ENCODE measurements at regions of chr21 and their contacts with region 1.

Region 1: DNA sequence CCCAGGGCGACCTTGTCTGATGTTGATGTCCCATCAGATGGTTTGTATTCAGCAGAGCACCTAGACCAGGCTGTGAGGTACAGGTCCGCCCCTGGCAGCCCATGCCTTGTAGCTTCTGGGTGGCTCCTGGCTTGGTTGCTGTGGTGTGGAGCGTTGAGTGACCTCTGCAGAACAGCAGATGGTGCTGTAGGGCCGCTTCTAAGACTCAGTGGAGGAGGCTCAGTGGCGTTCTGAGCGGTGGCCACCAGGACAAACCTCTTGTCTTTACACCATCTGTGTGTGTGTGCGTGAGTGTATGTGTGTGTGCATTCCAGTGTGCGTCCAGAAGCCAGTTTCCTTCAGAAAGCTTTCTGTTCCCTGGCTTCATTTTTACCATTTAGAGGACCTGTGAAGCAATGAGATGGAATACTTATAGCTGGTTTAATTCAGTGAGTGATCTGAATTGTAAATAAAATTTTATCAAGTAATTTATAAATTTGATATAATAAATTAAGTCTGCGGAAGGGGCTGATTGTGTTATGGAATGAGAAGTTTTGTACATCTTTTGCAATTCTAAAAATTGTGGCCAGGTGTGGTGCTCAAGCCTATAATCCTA is 66.1 kb downstream of the ADARB1 start:
- DNase-seq: peak; percentile 36 to 80 (median 44)
- H3K4me3 ChIP-seq: no peak overlapping the region
- H3K4me3 Mint-ChIP-seq: peak overlapping the region in 1 of 7 donors; percentile 2
- H3K27ac ChIP-seq: no peak overlapping the region
- H3K27ac Mint-ChIP-seq: peak overlapping the region in 2 of 8 donors; percentile 5 to 43
- H3K4me1 ChIP-seq: peaks cover 4% of the 10 kb centered on the region
- H3K4me1 Mint-ChIP-seq: peaks cover 8 to 19% (median 15%) of the 10 kb centered on the region in 3 donors
- H3K27me3 ChIP-seq: no peaks in the 10 kb centered on the region
- H3K27me3 Mint-ChIP-seq: peaks cover 0 to 1% of the 10 kb centered on the region in 2 donors

Region 2: GRCh38 chr21:44836666-44837471 is 303.6 kb before region 1 on chr21:
- CTCF ChIA-PET with region 1: no interaction called
- POLR2A ChIA-PET with region 1: no interaction called
- DNase-seq: no peak
- H3K4me3 ChIP-seq: no peak overlapping the region
- H3K4me3 Mint-ChIP-seq: no peak overlapping the region
- H3K27ac ChIP-seq: no peak overlapping the region
- H3K27ac Mint-ChIP-seq: no peak overlapping the region
- H3K4me1 ChIP-seq: no peaks in the 10 kb centered on the region
- H3K4me1 Mint-ChIP-seq: no peaks in the 10 kb centered on the region
- H3K27me3 ChIP-seq: no peaks in the 10 kb centered on the region
- H3K27me3 Mint-ChIP-seq: peaks cover under 1 to 16% of the 10 kb centered on the region in 2 donors

Region 3: DNA sequence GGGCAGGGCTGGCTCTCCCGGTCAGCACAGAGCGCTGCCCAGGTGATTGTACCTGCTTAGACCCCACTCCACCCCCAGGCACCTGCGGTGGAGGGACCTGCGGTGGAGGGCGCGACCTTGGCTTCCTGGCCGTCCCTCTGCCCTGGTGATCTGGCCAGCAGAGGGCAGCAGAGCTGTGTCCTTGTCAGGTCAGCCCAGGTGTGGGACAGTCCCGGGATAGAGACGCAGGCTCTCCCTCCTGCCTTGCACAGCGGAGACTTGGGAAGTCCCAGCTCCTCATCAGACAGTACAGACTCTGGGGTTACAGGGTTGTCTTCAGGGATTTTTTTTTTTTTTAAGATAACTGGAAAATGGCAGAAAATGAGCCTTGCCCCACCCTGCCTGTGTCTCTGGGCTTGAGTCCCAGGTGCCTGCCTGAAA is 190.7 kb before region 1 on chr21:
- CTCF ChIA-PET with region 1: interaction called, 78 read pairs
- POLR2A ChIA-PET with region 1: interaction called, 3 read pairs
- DNase-seq: peak; percentile 65 to 87 (median 79)
- H3K4me3 ChIP-seq: no peak overlapping the region
- H3K4me3 Mint-ChIP-seq: peak overlapping the region in 1 of 7 donors; percentile 61
- H3K27ac ChIP-seq: no peak overlapping the region
- H3K27ac Mint-ChIP-seq: peak overlapping the region in 1 of 8 donors; percentile 65
- H3K4me1 ChIP-seq: peaks cover 6% of the 10 kb centered on the region
- H3K4me1 Mint-ChIP-seq: peaks cover 10 to 22% (median 10%) of the 10 kb centered on the region in 3 donors
- H3K27me3 ChIP-seq: no peaks in the 10 kb centered on the region
- H3K27me3 Mint-ChIP-seq: no peaks in the 10 kb centered on the region

Region 4: GRCh38 chr21:45130324-45130774 is 10.1 kb before region 1 on chr21:
- CTCF ChIA-PET with region 1: interaction called, 74 read pairs
- POLR2A ChIA-PET with region 1: no interaction called
- DNase-seq: no peak
- H3K4me3 ChIP-seq: no peak overlapping the region
- H3K4me3 Mint-ChIP-seq: no peak overlapping the region
- H3K27ac ChIP-seq: no peak overlapping the region
- H3K27ac Mint-ChIP-seq: peak overlapping the region in 1 of 8 donors; percentile 54
- H3K4me1 ChIP-seq: peaks cover 13% of the 10 kb centered on the region
- H3K4me1 Mint-ChIP-seq: peaks cover 8 to 26% (median 12%) of the 10 kb centered on the region in 3 donors
- H3K27me3 ChIP-seq: no peaks in the 10 kb centered on the region
- H3K27me3 Mint-ChIP-seq: no peaks in the 10 kb centered on the region

Region 5: GRCh38 chr21:45161038-45161945 is 20.8 kb after region 1 on chr21:
- CTCF ChIA-PET with region 1: interaction called, 17 read pairs
- POLR2A ChIA-PET with region 1: interaction called, 5 read pairs
- DNase-seq: no peak
- H3K4me3 ChIP-seq: no peak overlapping the region
- H3K4me3 Mint-ChIP-seq: no peak overlapping the region
- H3K27ac ChIP-seq: no peak overlapping the region
- H3K27ac Mint-ChIP-seq: peak overlapping the region in 1 of 8 donors; percentile 57
- H3K4me1 ChIP-seq: no peaks in the 10 kb centered on the region
- H3K4me1 Mint-ChIP-seq: peaks cover 0 to 11% (median 2%) of the 10 kb centered on the region in 3 donors
- H3K27me3 ChIP-seq: no peaks in the 10 kb centered on the region
- H3K27me3 Mint-ChIP-seq: no peaks in the 10 kb centered on the region

Region 6: GRCh38 chr21:45420061-45420985 is 279.9 kb after region 1 on chr21:
- CTCF ChIA-PET with region 1: no interaction called
- POLR2A ChIA-PET with region 1: no interaction called
- DNase-seq: peak in 1 of 5 donors; percentile 30
- H3K4me3 ChIP-seq: no peak overlapping the region
- H3K4me3 Mint-ChIP-seq: no peak overlapping the region
- H3K27ac ChIP-seq: no peak overlapping the region
- H3K27ac Mint-ChIP-seq: no peak overlapping the region
- H3K4me1 ChIP-seq: no peaks in the 10 kb centered on the region
- H3K4me1 Mint-ChIP-seq: no peaks in the 10 kb centered on the region
- H3K27me3 ChIP-seq: no peaks in the 10 kb centered on the region
- H3K27me3 Mint-ChIP-seq: peaks cover 2 to 10% of the 10 kb centered on the region in 2 donors

Region 7: DNA sequence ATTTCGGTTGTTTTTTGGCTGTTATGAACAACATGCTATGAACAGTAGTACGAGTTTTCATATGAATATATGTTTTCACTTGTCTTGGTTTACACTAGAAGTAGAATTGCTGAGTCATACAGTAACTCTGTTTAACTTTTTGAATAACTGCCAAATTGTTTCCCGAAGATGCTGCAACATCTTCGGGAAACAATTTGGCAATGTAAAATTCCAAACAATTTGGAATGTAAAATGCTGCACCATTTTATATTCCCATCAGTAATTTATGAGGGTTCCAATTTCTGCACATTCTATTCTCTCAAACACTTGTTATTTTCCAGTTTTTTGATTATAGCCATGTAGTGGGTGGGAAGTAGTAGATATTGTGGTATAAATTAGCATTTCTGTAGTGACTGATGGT is 514.7 kb after region 1 on chr21:
- CTCF ChIA-PET with region 1: no interaction called
- POLR2A ChIA-PET with region 1: no interaction called
- DNase-seq: no peak
- H3K4me3 ChIP-seq: no peak overlapping the region
- H3K4me3 Mint-ChIP-seq: no peak overlapping the region
- H3K27ac ChIP-seq: no peak overlapping the region
- H3K27ac Mint-ChIP-seq: no peak overlapping the region
- H3K4me1 ChIP-seq: no peaks in the 10 kb centered on the region
- H3K4me1 Mint-ChIP-seq: no peaks in the 10 kb centered on the region
- H3K27me3 ChIP-seq: no peaks in the 10 kb centered on the region
- H3K27me3 Mint-ChIP-seq: peaks cover 16 to 65% of the 10 kb centered on the region in 2 donors